CD14-positive monocyte (primary cell): ENCODE measurements at regions of chr15 and their contacts with region 1.

Region 1: GRCh38 chr15:80970018-80970658 is 19.5 kb downstream of the MESD start:
- DNase-seq: peak; percentile 39 to 57 (median 50)
- H3K4me3 ChIP-seq: no peak overlapping the region
- H3K4me3 Mint-ChIP-seq: no peak overlapping the region
- H3K27ac ChIP-seq: no peak overlapping the region
- H3K27ac Mint-ChIP-seq: no peak overlapping the region
- H3K4me1 ChIP-seq: no peaks in the 10 kb centered on the region
- H3K4me1 Mint-ChIP-seq: no peaks in the 10 kb centered on the region
- H3K27me3 ChIP-seq: no peaks in the 10 kb centered on the region
- H3K27me3 Mint-ChIP-seq: peaks cover 0 to 4% (median 0%) of the 10 kb centered on the region in 3 donors
- CTCF ChIP-seq: peak; percentile 84

Region 2: DNA sequence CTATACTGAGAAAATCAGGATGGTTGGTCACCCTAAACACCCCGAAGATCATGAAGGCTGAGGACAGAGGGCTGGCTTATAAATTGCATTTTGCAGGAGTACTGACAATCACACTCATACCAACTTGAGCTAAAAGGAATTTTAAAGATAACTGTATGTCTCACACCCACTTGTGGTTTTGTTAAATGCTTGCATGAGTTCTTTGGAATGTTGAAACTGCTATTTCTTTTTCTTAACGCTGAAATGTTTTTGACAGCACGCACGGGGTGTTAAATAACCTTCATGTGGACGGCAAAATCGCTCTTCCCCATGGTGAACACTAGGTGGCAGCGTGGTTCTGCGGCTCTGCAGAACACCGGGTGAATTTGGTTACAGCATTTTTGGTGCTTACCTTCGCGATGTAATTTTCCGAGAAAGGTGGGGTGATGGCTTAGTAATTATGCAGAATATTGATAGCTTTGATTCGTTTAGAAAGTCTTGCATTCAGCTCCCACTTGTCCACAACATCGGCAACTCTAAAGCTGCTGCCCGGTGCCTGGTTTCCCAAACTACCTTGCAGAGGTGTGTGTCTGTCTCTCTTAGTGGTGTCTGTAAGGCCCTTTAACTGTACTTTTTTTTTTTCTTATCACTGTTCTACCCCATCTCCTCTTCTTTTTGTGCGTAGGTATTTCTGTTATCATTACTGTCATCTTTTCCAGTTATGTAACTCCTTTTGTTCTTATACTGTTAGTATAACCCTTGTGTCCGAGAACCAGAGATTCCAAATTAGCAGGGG is 514.3 kb before region 1 on chr15:
- intact Hi-C with region 1: loop called (anchors 2 to 5 kb)
- DNase-seq: peak; percentile 51 to 65 (median 60)
- H3K4me3 ChIP-seq: no peak overlapping the region
- H3K4me3 Mint-ChIP-seq: peak overlapping the region in 1 of 2 donors; percentile 48
- H3K27ac ChIP-seq: no peak overlapping the region
- H3K27ac Mint-ChIP-seq: no peak overlapping the region
- H3K4me1 ChIP-seq: no peaks in the 10 kb centered on the region
- H3K4me1 Mint-ChIP-seq: peaks cover 4% of the 10 kb centered on the region
- H3K27me3 ChIP-seq: peaks cover 22 to 47% of the 10 kb centered on the region in 2 donors
- H3K27me3 Mint-ChIP-seq: peaks cover 40 to 53% (median 42%) of the 10 kb centered on the region in 3 donors
- CTCF ChIP-seq: peak; percentile 88

Region 3: GRCh38 chr15:81043935-81044575 is 73.9 kb after region 1 on chr15:
- intact Hi-C with region 1: no loop called
- DNase-seq: no peak
- H3K4me3 ChIP-seq: no peak overlapping the region
- H3K4me3 Mint-ChIP-seq: no peak overlapping the region
- H3K27ac ChIP-seq: no peak overlapping the region
- H3K27ac Mint-ChIP-seq: no peak overlapping the region
- H3K4me1 ChIP-seq: peaks cover 0 to 3% of the 10 kb centered on the region in 2 donors
- H3K4me1 Mint-ChIP-seq: peaks cover 4% of the 10 kb centered on the region
- H3K27me3 ChIP-seq: no peaks in the 10 kb centered on the region
- H3K27me3 Mint-ChIP-seq: peaks cover 0 to 4% (median 4%) of the 10 kb centered on the region in 3 donors
- CTCF ChIP-seq: no peak

Region 4: DNA sequence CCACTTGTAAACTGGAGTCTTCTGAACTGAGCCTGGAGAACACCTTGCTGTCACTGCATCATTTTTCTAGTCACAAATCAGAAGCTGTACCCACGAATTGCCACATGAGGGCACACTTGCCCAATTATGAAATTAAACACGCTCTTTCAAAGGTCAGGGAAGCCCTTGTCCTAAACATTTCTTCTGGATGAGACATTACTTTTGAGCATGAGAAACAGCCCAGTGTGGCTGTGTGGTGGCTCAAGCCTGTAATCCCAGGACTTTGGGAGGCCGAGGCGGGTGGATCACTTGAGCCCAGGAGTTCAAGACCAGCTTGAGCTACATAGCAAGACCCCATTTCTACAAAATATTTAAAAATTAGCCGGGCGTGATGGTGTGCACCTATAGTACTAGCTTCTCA is 136.4 kb after region 1 on chr15:
- intact Hi-C with region 1: loop called in 1 of 2 experiments (anchors 10 kb)
- DNase-seq: peak; percentile 33 to 42 (median 35)
- H3K4me3 ChIP-seq: no peak overlapping the region
- H3K4me3 Mint-ChIP-seq: no peak overlapping the region
- H3K27ac ChIP-seq: no peak overlapping the region
- H3K27ac Mint-ChIP-seq: peak overlapping the region in 1 of 7 donors; percentile 36
- H3K4me1 ChIP-seq: no peaks in the 10 kb centered on the region
- H3K4me1 Mint-ChIP-seq: peaks cover 6% of the 10 kb centered on the region
- H3K27me3 ChIP-seq: peaks cover 0 to 3% of the 10 kb centered on the region in 2 donors
- H3K27me3 Mint-ChIP-seq: peaks cover 5 to 12% (median 8%) of the 10 kb centered on the region in 3 donors
- CTCF ChIP-seq: peak; percentile 81